ENCODE measurements at regions of chr19 and their contacts with region 1.

Region 1: DNA sequence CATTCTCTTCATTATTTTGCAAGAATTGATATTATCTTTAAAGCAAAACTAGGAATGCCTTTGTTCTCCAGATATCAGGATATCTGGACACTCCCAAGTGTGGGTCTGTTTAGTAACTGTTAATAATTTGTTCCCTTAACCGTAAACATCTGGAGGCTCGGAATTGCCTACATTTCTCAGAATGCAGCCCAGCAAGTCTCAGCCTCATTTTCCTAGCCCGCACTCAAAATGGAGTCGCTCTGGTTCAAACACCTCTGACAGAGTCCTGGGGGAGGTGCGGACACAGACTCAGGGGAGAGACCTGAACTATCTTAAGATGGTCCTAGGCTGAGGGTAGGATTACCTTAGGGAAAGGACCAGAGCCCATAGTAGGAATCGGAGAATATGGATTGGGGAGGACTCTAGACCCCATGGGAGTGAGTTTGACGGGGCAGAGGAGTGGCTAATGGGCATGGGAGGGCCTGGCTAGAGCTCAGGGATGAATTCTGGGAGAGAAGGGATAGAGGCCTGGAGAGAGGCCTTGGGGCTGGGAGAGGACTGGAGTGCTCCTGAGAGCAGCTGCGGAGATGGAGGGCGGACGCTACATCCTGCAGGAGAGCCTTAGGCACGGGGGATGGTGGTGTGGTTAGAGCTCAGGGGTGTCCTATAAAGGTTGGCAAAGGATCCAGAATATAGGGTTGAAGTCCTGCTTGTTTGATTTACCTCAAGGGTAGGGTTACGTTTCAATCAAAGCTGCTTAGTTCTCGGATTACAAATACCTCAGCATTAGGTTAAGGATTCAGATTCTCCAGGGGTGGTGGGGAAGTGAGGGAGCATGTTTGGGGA is 43.2 kb downstream of the ZNF331 start:
- DNase-seq: no peak
- H3K4me3 ChIP-seq: no peak overlapping the region
- H3K27ac ChIP-seq: no peak overlapping the region
- H3K4me1 ChIP-seq: no peaks in the 10 kb centered on the region
- H3K27me3 ChIP-seq: no peaks in the 10 kb centered on the region
- CTCF ChIP-seq: no peak

Region 2: GRCh38 chr19:53147645-53148044 is 433.5 kb before region 1 on chr19:
- CTCF ChIA-PET with region 1: no interaction called
- dilution Hi-C with region 1: loop called (anchors 10 kb)
- in situ Hi-C with region 1: no loop called
- intact Hi-C with region 1: no loop called
- DNase-seq: no peak
- H3K4me3 ChIP-seq: no peak overlapping the region
- H3K27ac ChIP-seq: no peak overlapping the region
- H3K4me1 ChIP-seq: no peaks in the 10 kb centered on the region
- H3K27me3 ChIP-seq: no peaks in the 10 kb centered on the region
- CTCF ChIP-seq: no peak

Measured in mammary epithelial cell (primary cell).